HEK293T (cell line): ENCODE measurements at regions of chr10 and their contacts with region 1.

Region 1: GRCh38 chr10:29107849-29108498 is 180.9 kb upstream of the LYZL1 start:
- DNase-seq: no peak

Region 2: DNA sequence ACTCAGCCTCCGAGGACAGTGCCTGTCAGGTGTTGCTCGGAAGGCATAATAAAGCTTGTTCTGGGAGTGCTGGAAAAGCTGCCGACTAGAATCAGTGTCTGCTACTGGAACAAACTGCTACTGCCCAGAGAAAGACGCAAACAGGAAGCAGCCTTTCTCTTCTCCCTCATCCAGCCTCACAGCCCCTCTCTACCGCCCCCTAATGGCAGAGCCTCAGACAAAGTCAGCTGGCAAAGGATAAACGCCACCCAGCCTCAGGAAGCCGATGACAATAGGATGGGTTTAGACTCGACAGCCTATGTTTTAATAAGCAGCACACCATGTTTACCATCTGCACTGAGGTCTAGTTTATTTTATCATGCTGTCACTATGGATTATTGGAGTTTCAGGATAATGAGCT is 11.4 kb after region 1 on chr10:
- CTCF ChIA-PET with region 1: interaction called, 11 read pairs
- POLR2A ChIA-PET with region 1: interaction called, 3 read pairs
- DNase-seq: peak; percentile 63